Breast epithelium (tissue), 4 donors: ENCODE measurements at regions of chr10 and their contacts with region 1.

Region 1: DNA sequence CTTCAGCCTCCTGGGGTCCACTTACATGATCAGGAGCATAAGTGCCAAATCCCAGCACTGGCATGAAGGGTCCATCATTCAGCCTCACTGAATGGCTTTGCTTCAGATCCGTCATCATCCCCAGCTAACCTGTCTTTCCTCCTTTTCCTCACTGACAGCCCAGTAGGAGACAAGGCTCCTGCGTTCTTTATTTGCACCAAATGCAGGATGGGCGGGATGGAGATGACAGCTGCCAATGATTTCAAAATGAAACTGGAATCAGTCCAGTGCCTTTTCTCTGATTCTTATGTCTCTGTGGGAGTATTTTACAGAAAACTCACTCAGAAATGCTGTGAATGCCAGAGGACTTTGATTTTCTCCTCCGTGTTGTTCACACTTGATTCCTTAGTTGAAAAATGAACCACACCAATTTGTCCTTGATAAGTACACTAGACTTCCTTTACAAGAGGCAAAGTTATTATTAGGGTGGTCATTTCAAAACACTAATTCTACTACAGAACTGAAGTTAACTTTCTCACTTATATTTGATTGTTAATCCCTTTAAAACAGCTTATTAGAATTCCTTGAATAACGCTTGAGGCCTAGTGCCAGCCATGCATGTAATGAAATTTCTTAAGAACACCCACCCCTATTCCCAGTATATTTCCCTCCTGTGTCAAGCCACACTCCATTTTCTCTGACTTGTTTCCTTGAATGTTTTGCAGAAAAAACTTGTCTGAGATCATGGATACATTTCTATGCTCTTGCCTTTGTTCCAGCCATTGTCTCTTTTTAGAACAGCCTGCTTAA is at the start of gene AKR1C8:
- DNase-seq: no peak
- H3K4me3 ChIP-seq: no peak within 1 kb of the TSS
- H3K27ac ChIP-seq: no peak within 1 kb of the TSS
- H3K4me1 ChIP-seq: no peaks in the 10 kb centered on the region
- H3K27me3 ChIP-seq: no peaks in the 10 kb centered on the region
- CTCF ChIP-seq: no peak
- POLR2A ChIP-seq: no peak
- total RNA-seq, gene AKR1C8: 0.33 to 0.73 TPM in 2 of 3 donors, not detected in the other

Region 2: GRCh38 chr10:4391683-4392082 is 793.5 kb before region 1 on chr10:
- intact Hi-C with region 1: loop called (anchors 10 kb)
- DNase-seq: no peak
- H3K4me3 ChIP-seq: no peak overlapping the region
- H3K27ac ChIP-seq: no peak overlapping the region
- H3K4me1 ChIP-seq: no peaks in the 10 kb centered on the region
- H3K27me3 ChIP-seq: no peaks in the 10 kb centered on the region
- CTCF ChIP-seq: no peak
- POLR2A ChIP-seq: no peak

Region 3: GRCh38 chr10:5013385-5013784 is 171.8 kb before region 1 on chr10:
- intact Hi-C with region 1: no loop called
- DNase-seq: no peak
- H3K4me3 ChIP-seq: no peak overlapping the region
- H3K27ac ChIP-seq: peak overlapping the region in 1 of 2 donors; percentile 4
- H3K4me1 ChIP-seq: no peaks in the 10 kb centered on the region
- H3K27me3 ChIP-seq: no peaks in the 10 kb centered on the region
- CTCF ChIP-seq: no peak
- POLR2A ChIP-seq: no peak